K562 (cell line): ENCODE measurements at regions of chr2 and their contacts with region 1.

Region 1: GRCh38 chr2:208399202-208399601 is 7.4 kb upstream of the PTH2R start:
- DNase-seq: no peak
- ATAC-seq: no peak
- H3K4me3 ChIP-seq: no peak overlapping the region
- H3K27ac ChIP-seq: no peak overlapping the region
- H3K4me1 ChIP-seq: no peaks in the 10 kb centered on the region
- H3K27me3 ChIP-seq: no peaks in the 10 kb centered on the region
- CTCF ChIP-seq: no peak
- EP300 ChIP-seq: no peak
- POLR2A ChIP-seq: no peak
- RAD21 ChIP-seq: no peak

Region 2: GRCh38 chr2:208062113-208062512 is 337.1 kb before region 1 on chr2:
- CTCF ChIA-PET with region 1: no interaction called
- POLR2A ChIA-PET with region 1: no interaction called
- in situ Hi-C with region 1: no loop called
- intact Hi-C with region 1: no loop called
- DNase-seq: peak; percentile 26 to 63 (median 32)
- ATAC-seq: peak; percentile 84
- H3K4me3 ChIP-seq: no peak overlapping the region
- H3K27ac ChIP-seq: no peak overlapping the region
- H3K4me1 ChIP-seq: peaks cover 3 to 17% of the 10 kb centered on the region in 2 experiments; a peak in 4 of 5 replicates
- H3K27me3 ChIP-seq: no peaks in the 10 kb centered on the region
- CTCF ChIP-seq: peak in 2 of 3 experiments; percentile 36 to 54; a peak in 2 of 6 replicates
- EP300 ChIP-seq: peak; percentile 59; the same call in 1 of the 2 replicates
- POLR2A ChIP-seq: no peak
- RAD21 ChIP-seq: peak; percentile 49 to 57

Region 3: GRCh38 chr2:208265801-208266552 is 133.2 kb before region 1 on chr2 and contains the start of gene PIKFYVE:
- CTCF ChIA-PET with region 1: no interaction called
- POLR2A ChIA-PET with region 1: no interaction called
- in situ Hi-C with region 1: no loop called
- intact Hi-C with region 1: no loop called
- DNase-seq: peak; percentile 81 to 96 (median 90)
- ATAC-seq: peak; percentile 89
- H3K4me3 ChIP-seq: peak within 1 kb of the TSS; percentile 96
- H3K27ac ChIP-seq: peak within 1 kb of the TSS; percentile 77
- H3K4me1 ChIP-seq: peaks cover 4 to 7% of the 10 kb centered on the region in 2 experiments; a peak in 4 of 5 replicates
- H3K27me3 ChIP-seq: no peaks in the 10 kb centered on the region
- CTCF ChIP-seq: no peak
- EP300 ChIP-seq: peak; percentile 27
- POLR2A ChIP-seq: peak; percentile 79
- RAD21 ChIP-seq: no peak
- polyA plus RNA-seq, gene PIKFYVE: 3.6 to 3.7 TPM

Region 4: DNA sequence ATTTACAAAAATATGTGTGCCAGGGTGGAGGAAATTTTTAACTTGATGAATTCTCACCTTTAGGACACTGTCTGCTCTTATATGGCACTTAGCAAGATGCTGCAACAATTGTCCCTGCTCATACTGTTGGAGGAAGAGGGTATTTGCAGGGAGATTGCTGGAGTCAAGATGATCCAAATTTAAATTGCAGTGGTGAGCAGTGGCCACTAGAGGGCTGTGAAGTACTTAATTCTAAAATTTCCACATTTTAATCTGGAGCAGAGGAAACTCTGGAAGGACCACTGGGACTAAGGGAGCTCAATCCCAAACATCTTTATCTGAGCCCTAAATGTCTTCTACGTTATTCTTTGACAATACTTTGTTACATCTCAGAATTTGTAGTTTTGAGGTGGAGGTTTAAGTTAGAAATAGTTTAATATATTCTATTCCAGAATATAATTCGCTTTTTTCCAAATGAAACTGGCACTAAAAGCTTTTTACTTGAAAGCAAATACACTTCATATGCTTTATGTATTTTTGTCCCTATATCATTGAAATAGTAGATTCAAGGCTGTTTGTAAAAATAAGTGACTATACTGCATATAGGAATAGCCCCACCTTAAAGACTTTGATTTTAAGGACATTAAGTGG is 25.6 kb before region 1 on chr2:
- CTCF ChIA-PET with region 1: no interaction called
- POLR2A ChIA-PET with region 1: no interaction called
- in situ Hi-C with region 1: no loop called
- intact Hi-C with region 1: no loop called
- DNase-seq: peak; percentile 31 to 45 (median 34)
- ATAC-seq: peak; percentile 72
- H3K4me3 ChIP-seq: no peak overlapping the region
- H3K27ac ChIP-seq: no peak overlapping the region
- H3K4me1 ChIP-seq: peaks cover 0 to 12% of the 10 kb centered on the region in 2 experiments; a peak in 2 of 5 replicates
- H3K27me3 ChIP-seq: no peaks in the 10 kb centered on the region
- CTCF ChIP-seq: peak; percentile 46 to 66 (median 64); a peak in 5 of 6 replicates
- EP300 ChIP-seq: no peak
- POLR2A ChIP-seq: no peak
- RAD21 ChIP-seq: peak; percentile 29 to 41; a peak in 2 of 4 replicates

Region 5: DNA sequence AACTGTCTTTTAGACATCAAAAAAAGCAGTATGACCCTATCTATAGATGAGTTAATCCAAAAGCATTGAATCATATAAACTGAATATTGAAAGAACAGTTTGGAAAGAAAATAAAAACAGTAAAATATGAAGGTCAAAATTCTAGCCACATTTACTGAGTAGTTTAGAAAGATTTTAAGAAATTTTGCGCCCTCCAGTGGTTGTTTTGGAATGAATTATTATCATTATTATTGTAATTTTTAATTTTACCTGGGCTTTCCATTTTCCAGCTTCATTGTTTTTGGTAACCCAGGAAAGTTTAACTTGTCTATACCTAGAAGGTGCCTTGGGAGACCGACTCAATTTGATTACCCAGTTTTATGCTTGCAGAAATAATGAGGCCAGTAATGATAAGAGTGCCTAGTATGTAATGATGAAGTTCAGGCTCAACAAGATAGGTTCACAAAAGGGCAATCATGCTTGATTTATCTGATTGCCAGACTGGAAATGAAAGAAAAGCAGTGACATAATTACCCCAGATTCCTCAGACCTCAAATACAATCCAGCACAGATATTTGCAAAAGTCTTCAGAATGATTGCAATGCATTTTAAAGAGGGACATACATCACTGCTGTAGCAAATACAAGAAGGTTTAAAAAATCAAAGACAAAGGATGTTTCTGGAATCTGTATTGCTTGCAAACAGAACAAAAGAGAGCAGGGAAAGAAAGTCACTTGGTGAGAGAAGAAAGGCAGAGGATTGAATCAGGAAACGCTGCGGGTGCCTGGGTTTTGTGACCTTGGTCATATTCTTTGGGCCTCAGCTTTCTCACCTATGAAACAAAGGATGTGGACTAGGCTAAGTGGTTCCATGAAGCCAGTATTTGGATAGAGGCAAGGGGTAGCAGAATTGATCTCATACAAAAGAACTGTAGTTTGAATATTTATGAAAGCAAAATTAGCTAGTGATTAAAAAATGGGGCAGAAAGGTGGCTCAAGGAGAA is 1178.5 kb after region 1 on chr2:
- CTCF ChIA-PET with region 1: no interaction called
- POLR2A ChIA-PET with region 1: no interaction called
- in situ Hi-C with region 1: no loop called
- intact Hi-C with region 1: loop called (anchors 5 kb)
- DNase-seq: peak in 1 of 4 experiments; percentile 6
- ATAC-seq: no peak
- H3K4me3 ChIP-seq: no peak overlapping the region
- H3K27ac ChIP-seq: no peak overlapping the region
- H3K4me1 ChIP-seq: no peaks in the 10 kb centered on the region
- H3K27me3 ChIP-seq: no peaks in the 10 kb centered on the region
- CTCF ChIP-seq: no peak
- EP300 ChIP-seq: no peak
- POLR2A ChIP-seq: no peak
- RAD21 ChIP-seq: peak in 1 of 2 experiments; percentile 31; a peak in 1 of 4 replicates